ENCODE measurements at regions of chr2 and their contacts with region 1.

Region 1: DNA sequence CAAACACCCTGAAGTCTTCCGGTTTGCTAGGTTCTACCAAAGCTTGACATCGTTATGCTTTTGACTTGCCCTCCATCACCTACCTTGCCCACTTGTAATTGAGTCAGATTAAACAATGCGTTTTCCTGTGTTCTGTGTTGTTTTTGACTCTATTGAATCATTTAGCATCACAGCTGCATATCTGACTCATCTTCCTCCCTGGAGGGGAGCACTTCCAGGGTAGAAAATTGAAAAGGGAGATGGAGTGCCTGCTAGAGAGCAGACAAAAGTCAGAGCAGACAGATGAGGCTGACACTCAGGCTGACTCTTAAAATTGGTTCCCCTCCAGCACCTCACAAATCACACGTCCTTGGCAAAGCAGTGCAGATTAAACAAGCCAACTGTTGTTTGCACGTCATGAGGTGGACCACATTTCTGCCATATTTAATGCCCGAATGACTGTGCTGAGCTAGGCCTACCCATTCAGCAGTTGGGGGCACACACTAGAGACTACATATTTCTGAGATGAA is 2.2 kb downstream of the MPP4 start:
- DNase-seq: peak; percentile 95
- H3K4me3 ChIP-seq: no peak overlapping the region
- H3K27ac ChIP-seq: peak overlapping the region; percentile 96
- H3K4me1 ChIP-seq: peaks cover 61% of the 10 kb centered on the region
- H3K27me3 ChIP-seq: no peaks in the 10 kb centered on the region
- CTCF ChIP-seq: no peak
- POLR2A ChIP-seq: peak; percentile 43

Region 2: DNA sequence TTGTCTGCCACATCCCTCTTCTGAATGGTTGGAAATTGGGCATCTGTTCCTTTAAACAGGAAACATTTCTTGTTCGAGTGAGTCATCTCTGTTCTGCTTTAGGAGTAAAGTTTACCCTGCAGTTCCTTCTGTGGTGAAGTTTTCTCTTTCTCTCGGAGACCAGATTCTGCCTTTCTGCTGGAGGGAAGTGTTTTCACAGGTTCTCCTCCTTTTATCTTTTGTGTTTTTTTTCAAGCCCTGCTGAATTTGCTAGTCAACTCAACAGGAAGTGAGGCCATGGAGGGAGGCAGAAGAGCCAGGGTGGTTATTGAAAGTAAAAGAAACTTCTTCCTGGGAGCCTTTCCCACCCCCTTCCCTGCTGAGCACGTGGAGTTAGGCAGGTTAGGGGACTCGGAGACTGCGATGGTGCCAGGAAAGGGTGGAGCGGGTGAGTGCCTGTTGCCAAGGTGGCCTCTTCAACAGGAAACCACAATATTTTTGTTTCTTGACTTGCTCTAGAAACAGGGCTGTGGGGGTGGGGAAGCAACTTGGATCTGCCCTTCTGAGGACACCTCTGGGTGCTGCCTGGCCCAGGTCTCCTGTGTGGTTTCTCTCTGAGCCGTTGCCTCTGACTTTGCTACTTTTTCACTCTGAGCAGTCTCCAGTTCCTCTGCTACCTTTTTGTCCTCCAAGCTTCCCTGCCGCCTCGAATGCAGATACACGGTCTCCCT is 438.1 kb before region 1 on chr2:
- CTCF ChIA-PET with region 1: no interaction called
- POLR2A ChIA-PET with region 1: no interaction called
- dilution Hi-C with region 1: no loop called
- intact Hi-C with region 1: loop called (anchors 5 kb)
- DNase-seq: peak; percentile 84
- H3K4me3 ChIP-seq: peak overlapping the region; percentile 43 to 80 (median 78)
- H3K27ac ChIP-seq: peak overlapping the region; percentile 98
- H3K4me1 ChIP-seq: peaks cover 30% of the 10 kb centered on the region
- H3K27me3 ChIP-seq: no peaks in the 10 kb centered on the region
- CTCF ChIP-seq: no peak
- POLR2A ChIP-seq: peak; percentile 31

Region 3: GRCh38 chr2:201621293-201621999 is 74.8 kb before region 1 on chr2:
- CTCF ChIA-PET with region 1: interaction called, 4 read pairs
- POLR2A ChIA-PET with region 1: no interaction called
- dilution Hi-C with region 1: no loop called
- intact Hi-C with region 1: loop called (anchors 2 kb)
- DNase-seq: peak; percentile 89
- H3K4me3 ChIP-seq: peak overlapping the region in 1 of 3 experiments; percentile 20
- H3K27ac ChIP-seq: peak overlapping the region; percentile 74
- H3K4me1 ChIP-seq: peaks cover 26% of the 10 kb centered on the region
- H3K27me3 ChIP-seq: no peaks in the 10 kb centered on the region
- CTCF ChIP-seq: no peak
- POLR2A ChIP-seq: peak; percentile 61

Region 4: DNA sequence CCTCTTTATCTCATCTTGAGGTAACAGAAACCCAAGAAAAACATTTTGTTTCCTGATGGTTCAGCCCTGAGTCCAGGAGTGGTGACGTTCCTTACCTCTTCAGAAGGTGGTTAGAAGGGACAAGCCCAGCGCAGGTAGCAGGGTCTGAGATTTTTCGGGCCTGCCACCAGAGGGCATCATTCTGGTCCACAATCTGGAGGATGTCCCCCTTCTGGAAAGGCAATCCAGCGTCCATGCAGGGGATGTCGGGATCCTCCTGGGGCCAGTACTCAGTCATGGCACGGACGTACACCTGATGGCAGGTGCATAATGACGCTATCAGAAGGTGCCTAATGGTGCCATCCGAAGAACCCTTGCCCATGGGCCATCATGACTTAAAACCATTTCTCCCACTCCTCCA is 15.5 kb before region 1 on chr2:
- CTCF ChIA-PET with region 1: interaction called, 17 read pairs
- POLR2A ChIA-PET with region 1: interaction called, 8 read pairs
- dilution Hi-C with region 1: no loop called
- intact Hi-C with region 1: loop called (anchors 1 kb)
- DNase-seq: peak; percentile 38
- H3K4me3 ChIP-seq: no peak overlapping the region
- H3K27ac ChIP-seq: no peak overlapping the region
- H3K4me1 ChIP-seq: no peaks in the 10 kb centered on the region
- H3K27me3 ChIP-seq: no peaks in the 10 kb centered on the region
- CTCF ChIP-seq: peak; percentile 56 to 63
- POLR2A ChIP-seq: no peak

Region 5: DNA sequence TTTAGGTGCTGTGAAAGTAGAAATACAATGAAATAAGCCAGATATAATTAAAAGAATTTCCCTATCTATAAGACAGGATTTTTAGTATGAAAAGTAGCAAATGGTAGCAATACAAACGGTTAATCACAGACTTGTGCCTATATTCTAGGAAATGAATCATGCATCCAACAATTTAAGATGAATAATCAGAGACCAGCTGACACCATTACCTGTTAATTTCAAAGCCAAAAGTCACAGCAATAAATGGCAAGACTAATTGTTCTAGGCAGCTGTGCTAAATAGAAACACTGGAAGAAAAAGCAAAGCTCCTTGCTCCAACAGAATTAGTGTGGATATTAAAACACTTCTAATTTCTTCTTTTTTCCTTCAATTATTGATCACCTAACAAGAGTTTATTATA is 37.3 kb after region 1 on chr2:
- CTCF ChIA-PET with region 1: interaction called, 4 read pairs
- POLR2A ChIA-PET with region 1: interaction called, 3 read pairs
- dilution Hi-C with region 1: no loop called
- intact Hi-C with region 1: loop called (anchors 1 kb)
- DNase-seq: peak; percentile 86
- H3K4me3 ChIP-seq: peak overlapping the region in 1 of 3 experiments; percentile 40
- H3K27ac ChIP-seq: peak overlapping the region; percentile 23
- H3K4me1 ChIP-seq: peaks cover 38% of the 10 kb centered on the region
- H3K27me3 ChIP-seq: no peaks in the 10 kb centered on the region
- CTCF ChIP-seq: no peak
- POLR2A ChIP-seq: no peak